Endothelial cell of umbilical vein (primary cell): ENCODE measurements at regions of chr1 and their contacts with region 1.

Region 1: DNA sequence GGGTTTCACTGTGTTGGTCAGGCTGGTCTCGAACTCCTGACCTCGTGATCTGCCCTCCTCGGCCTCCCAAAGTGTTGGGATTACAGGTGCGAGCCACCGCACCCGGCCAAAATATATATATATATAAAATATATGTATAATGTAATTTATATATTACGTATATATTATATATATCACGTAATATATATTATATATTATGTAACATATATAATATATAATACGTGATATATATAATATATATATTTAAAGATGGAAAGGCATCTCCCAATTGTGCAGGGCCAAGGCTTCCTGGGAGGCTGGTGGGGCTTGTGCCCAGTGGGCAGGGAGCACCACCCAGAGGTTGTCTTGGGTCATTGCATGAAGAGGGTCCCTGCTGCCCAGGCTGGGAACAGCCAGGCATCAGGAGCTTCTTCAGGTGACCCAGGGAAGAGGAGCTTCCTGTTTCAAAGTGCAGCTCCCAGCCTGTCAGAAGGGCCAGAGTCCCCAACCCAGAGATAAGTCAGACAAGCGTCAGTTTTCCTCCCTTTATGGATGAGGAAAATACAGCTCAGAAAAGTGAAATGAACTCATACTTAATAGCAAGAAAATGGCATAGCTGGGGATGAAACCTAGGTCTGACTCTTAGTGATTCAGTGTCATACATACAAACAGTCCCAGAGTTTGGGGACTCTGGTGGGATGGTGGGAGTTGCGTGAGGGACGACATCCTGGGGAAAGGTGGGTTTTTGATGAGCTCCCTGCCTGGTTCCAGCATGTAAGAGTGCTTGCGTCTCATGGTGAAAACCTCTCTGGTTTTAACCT is 12.0 kb downstream of the UBE2Q1 start:
- DNase-seq: peak; percentile 73
- H3K4me3 ChIP-seq: no peak overlapping the region
- H3K27ac ChIP-seq: no peak overlapping the region
- H3K4me1 ChIP-seq: peaks cover 6% of the 10 kb centered on the region
- H3K27me3 ChIP-seq: no peaks in the 10 kb centered on the region
- CTCF ChIP-seq: peak; percentile 74 to 88
- POLR2A ChIP-seq: no peak

Region 2: GRCh38 chr1:154170547-154171222 is 375.8 kb before region 1 on chr1:
- CTCF ChIA-PET with region 1: no interaction called
- POLR2A ChIA-PET with region 1: no interaction called
- dilution Hi-C with region 1: no loop called
- intact Hi-C with region 1: no loop called
- DNase-seq: no peak
- H3K4me3 ChIP-seq: no peak overlapping the region
- H3K27ac ChIP-seq: no peak overlapping the region
- H3K4me1 ChIP-seq: peaks cover 2% of the 10 kb centered on the region
- H3K27me3 ChIP-seq: no peaks in the 10 kb centered on the region
- CTCF ChIP-seq: no peak
- POLR2A ChIP-seq: no peak

Region 3: GRCh38 chr1:154335025-154335714 is 211.3 kb before region 1 on chr1:
- CTCF ChIA-PET with region 1: interaction called, 32 read pairs
- POLR2A ChIA-PET with region 1: no interaction called
- dilution Hi-C with region 1: no loop called
- intact Hi-C with region 1: no loop called
- DNase-seq: peak; percentile 84
- H3K4me3 ChIP-seq: no peak overlapping the region
- H3K27ac ChIP-seq: no peak overlapping the region
- H3K4me1 ChIP-seq: peaks cover 4% of the 10 kb centered on the region
- H3K27me3 ChIP-seq: no peaks in the 10 kb centered on the region
- CTCF ChIP-seq: peak; percentile 84 to 90
- POLR2A ChIP-seq: no peak

Region 4: DNA sequence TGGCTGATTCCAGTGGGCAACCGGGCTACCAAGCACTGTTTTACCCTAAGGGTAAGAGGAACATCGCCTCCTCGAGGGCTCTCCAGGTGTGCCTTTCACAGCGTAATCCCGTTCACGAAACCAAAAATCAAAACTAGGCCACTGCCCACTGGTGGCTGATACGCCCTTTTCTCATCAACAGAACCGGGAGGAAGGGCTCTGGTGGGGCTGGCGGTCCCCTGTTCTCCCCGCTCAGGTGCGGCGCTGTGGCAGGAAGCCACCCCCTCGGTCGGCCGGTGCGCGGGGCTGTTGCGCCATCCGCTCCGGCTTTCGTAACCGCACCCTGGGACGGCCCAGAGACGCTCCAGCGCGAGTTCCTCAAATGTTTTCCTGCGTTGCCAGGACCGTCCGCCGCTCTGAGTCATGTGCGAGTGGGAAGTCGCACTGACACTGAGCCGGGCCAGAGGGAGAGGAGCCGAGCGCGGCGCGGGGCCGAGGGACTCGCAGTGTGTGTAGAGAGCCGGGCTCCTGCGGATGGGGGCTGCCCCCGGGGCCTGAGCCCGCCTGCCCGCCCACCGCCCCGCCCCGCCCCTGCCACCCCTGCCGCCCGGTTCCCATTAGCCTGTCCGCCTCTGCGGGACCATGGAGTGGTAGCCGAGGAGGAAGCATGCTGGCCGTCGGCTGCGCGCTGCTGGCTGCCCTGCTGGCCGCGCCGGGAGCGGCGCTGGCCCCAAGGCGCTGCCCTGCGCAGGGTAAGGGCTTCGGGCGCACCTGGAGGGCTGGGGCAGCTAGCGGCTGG is 141.3 kb before region 1 on chr1 and contains the start of gene IL6R:
- CTCF ChIA-PET with region 1: interaction called, 13 read pairs
- POLR2A ChIA-PET with region 1: no interaction called
- dilution Hi-C with region 1: no loop called
- intact Hi-C with region 1: loop called (anchors 1 kb)
- DNase-seq: peak; percentile 83
- H3K4me3 ChIP-seq: peak within 1 kb of the TSS; percentile 6 to 49 (median 36)
- H3K27ac ChIP-seq: peak within 1 kb of the TSS; percentile 18
- H3K4me1 ChIP-seq: peaks cover 13% of the 10 kb centered on the region
- H3K27me3 ChIP-seq: no peaks in the 10 kb centered on the region
- CTCF ChIP-seq: peak; percentile 28 to 42
- POLR2A ChIP-seq: no peak
- total RNA-seq, gene IL6R: 3.3 and 4.8 TPM in 2 replicates

Region 5: GRCh38 chr1:154479764-154480421 is 66.6 kb before region 1 on chr1:
- CTCF ChIA-PET with region 1: interaction called, 489 read pairs
- POLR2A ChIA-PET with region 1: interaction called, 16 read pairs
- dilution Hi-C with region 1: no loop called
- intact Hi-C with region 1: loop called (anchors 1 kb)
- DNase-seq: peak; percentile 92
- H3K4me3 ChIP-seq: no peak overlapping the region
- H3K27ac ChIP-seq: no peak overlapping the region
- H3K4me1 ChIP-seq: peaks cover 35% of the 10 kb centered on the region
- H3K27me3 ChIP-seq: no peaks in the 10 kb centered on the region
- CTCF ChIP-seq: peak; percentile 77 to 93
- POLR2A ChIP-seq: no peak

Region 6: DNA sequence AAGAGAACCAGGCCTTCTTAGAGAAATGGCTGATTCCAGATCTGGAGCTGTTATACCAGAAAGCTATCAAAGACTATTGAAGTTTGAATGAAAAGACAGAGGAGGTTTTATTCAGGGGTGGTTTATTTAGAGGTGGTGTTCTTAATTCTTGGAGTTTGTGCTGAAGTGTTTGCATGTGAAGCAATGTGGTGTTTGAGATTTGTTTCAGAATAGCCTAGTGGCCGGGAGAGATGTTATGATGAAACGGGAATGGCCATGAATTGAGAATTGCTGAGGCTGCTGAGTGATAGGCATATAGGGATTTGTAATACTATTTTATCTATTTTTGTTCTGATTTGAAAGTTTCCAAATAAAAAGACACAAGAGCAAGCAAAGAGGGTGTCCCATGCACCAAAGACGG is 33.7 kb before region 1 on chr1:
- CTCF ChIA-PET with region 1: interaction called, 10 read pairs
- POLR2A ChIA-PET with region 1: no interaction called
- dilution Hi-C with region 1: no loop called
- intact Hi-C with region 1: no loop called
- DNase-seq: no peak
- H3K4me3 ChIP-seq: no peak overlapping the region
- H3K27ac ChIP-seq: no peak overlapping the region
- H3K4me1 ChIP-seq: no peaks in the 10 kb centered on the region
- H3K27me3 ChIP-seq: no peaks in the 10 kb centered on the region
- CTCF ChIP-seq: no peak
- POLR2A ChIP-seq: no peak

Region 7: GRCh38 chr1:154747740-154748404 is 201.4 kb after region 1 on chr1:
- CTCF ChIA-PET with region 1: no interaction called
- POLR2A ChIA-PET with region 1: no interaction called
- dilution Hi-C with region 1: no loop called
- intact Hi-C with region 1: no loop called
- DNase-seq: no peak
- H3K4me3 ChIP-seq: no peak overlapping the region
- H3K27ac ChIP-seq: no peak overlapping the region
- H3K4me1 ChIP-seq: no peaks in the 10 kb centered on the region
- H3K27me3 ChIP-seq: peaks cover 41 to 46% of the 10 kb centered on the region in 2 experiments
- CTCF ChIP-seq: no peak
- POLR2A ChIP-seq: no peak